Calu3 (cell line): ENCODE measurements at regions of chr10 and their contacts with region 1.

Region 1: GRCh38 chr10:17737027-17737965 is 14.7 kb upstream of the TMEM236 start:
- DNase-seq: no peak
- H3K4me3 Mint-ChIP-seq: no peak overlapping the region
- H3K27ac Mint-ChIP-seq: no peak overlapping the region
- H3K4me1 Mint-ChIP-seq: no peaks in the 10 kb centered on the region
- H3K27me3 Mint-ChIP-seq: no peaks in the 10 kb centered on the region
- CTCF ChIP-seq: peak; percentile 35

Region 2: DNA sequence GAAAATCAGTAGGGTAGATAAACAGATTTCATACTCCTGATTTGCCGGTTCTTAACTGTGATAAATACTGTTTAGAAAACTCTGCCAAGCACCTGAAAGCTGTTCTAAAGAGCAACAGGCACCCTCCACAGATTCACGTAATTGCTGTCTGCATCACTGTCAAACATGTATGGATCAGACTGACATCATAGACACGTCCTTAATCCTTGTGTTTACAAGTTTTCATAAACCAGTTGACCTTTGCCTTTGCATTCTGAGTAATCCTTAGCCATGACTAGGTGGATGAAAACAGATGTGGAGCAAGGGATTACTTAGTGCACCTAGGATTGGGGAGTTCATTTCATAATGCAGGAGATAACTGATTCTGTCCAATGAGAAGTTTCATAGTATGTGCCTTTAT is 256.1 kb after region 1 on chr10:
- CTCF ChIA-PET with region 1: no interaction called
- intact Hi-C with region 1: no loop called
- DNase-seq: no peak
- H3K4me3 Mint-ChIP-seq: no peak overlapping the region
- H3K27ac Mint-ChIP-seq: no peak overlapping the region
- H3K4me1 Mint-ChIP-seq: no peaks in the 10 kb centered on the region
- H3K27me3 Mint-ChIP-seq: no peaks in the 10 kb centered on the region
- CTCF ChIP-seq: no peak

Region 3: GRCh38 chr10:18238870-18239485 is 501.7 kb after region 1 on chr10:
- CTCF ChIA-PET with region 1: no interaction called
- intact Hi-C with region 1: loop called (anchors 5 kb)
- DNase-seq: no peak
- H3K4me3 Mint-ChIP-seq: no peak overlapping the region
- H3K27ac Mint-ChIP-seq: no peak overlapping the region
- H3K4me1 Mint-ChIP-seq: peaks cover 5% of the 10 kb centered on the region
- H3K27me3 Mint-ChIP-seq: peaks cover 39% of the 10 kb centered on the region
- CTCF ChIP-seq: peak; percentile 31